ENCODE measurements at regions of chr7 and their contacts with region 1.

Region 1: DNA sequence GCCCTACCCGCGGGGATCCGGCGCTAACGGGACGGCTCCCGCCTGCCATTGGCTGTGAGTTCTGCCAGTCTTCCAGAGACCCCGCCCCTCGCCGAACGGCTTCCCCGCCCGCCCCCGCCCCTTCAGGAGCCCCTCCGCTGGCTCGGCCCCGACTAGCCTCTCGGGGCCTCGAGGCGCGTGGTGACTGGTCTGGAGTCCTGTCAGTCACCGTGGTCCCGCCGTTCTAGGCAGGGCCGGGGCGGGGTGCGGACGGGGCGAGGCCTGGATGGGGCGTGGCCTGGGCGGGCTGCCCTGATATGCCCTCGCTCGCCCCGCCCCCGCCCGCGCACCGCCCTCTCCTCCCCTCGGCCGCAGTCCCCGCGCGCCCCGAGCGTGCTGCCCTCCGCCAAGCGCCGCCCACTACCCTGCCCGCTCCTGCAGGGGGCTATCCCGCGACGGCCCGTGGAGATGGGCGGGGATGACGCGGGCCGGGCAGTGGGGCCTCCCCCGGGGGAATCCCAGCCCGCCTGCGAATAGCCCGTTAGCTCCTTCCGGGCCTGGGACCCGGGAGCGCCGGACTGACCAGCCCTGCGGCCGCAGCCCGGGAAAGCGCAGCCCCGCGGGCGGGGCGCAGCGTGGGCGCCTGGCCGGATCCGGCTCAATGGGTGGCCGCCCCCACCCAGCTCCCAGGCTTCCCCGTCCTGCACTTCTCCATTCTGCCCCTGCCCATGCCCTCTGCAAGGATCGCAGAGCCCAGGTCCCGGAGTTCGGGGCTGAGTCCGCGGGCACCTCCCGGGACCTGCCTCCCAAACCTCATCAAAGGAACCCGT is 450 bp upstream of the HIP1 start:
- DNase-seq: peak; percentile 99 to 100 (median 100)
- ATAC-seq: peak; percentile 98 to 100 (median 99)
- H3K4me3 ChIP-seq: peak overlapping the region; percentile 76 to 100 (median 98)
- H3K27ac ChIP-seq: peak overlapping the region; percentile 71 to 95 (median 90)
- H3K4me1 ChIP-seq: peaks cover 0 to 42% (median 16%) of the 10 kb centered on the region in 12 donors
- H3K27me3 ChIP-seq: no peaks in the 10 kb centered on the region
- CTCF ChIP-seq: peak in 6 of 12 donors; percentile 21 to 43 (median 27)
- POLR2A ChIP-seq: peak in 1 of 2 donors; percentile 58

Region 2: DNA sequence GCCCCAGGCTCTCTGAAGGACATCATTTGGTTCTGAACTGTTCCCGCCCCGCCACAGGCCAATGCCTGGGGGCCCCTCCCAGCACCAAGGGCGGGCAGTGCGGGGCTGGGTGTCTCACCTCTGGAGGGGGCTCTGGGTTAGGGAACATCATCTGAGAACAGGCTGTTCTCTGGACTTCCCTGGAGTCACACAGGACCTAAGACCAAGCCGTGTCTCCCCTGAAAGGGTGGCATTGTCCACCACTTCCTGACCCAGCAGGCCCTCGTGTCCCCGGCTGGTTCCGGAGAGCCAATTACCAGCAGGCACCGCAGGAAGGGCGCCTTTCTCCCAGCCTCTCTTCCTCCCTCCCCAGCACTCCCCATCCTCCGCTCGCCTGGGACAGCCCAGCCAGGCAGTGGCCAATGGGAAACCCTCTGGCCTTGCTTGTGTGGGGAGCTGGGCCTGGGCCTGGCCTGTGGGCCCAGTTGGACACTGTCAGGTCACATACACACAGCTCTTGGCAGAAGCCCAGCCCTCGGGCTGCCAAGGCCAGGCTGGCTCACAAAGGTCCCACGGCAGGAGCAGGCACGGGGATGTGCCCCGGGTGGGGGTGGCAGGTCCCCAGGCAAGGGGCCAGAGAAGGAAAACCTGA is 127.5 kb before region 1 on chr7:
- intact Hi-C with region 1: loop called in 5 of 10 experiments (anchors 2 to 10 kb)
- DNase-seq: peak; percentile 85 to 95 (median 88)
- ATAC-seq: peak; percentile 99
- H3K4me3 ChIP-seq: peak overlapping the region in 10 of 12 donors; percentile 22 to 50 (median 38)
- H3K27ac ChIP-seq: peak overlapping the region; percentile 52 to 93 (median 80)
- H3K4me1 ChIP-seq: peaks cover 0 to 18% (median 7%) of the 10 kb centered on the region in 12 donors
- H3K27me3 ChIP-seq: no peaks in the 10 kb centered on the region
- CTCF ChIP-seq: peak in 4 of 12 donors; percentile 14 to 29 (median 20)
- POLR2A ChIP-seq: peak in 1 of 2 donors; percentile 38

Region 3: GRCh38 chr7:75617634-75618234 is 121.5 kb before region 1 on chr7:
- intact Hi-C with region 1: loop called in 3 of 10 experiments (anchors 5 to 10 kb)
- DNase-seq: peak; percentile 49 to 85 (median 74)
- ATAC-seq: peak; percentile 64 to 84 (median 78)
- H3K4me3 ChIP-seq: peak overlapping the region in 1 of 12 donors; percentile 2
- H3K27ac ChIP-seq: peak overlapping the region in 3 of 12 donors; percentile 39 to 89 (median 52)
- H3K4me1 ChIP-seq: peaks cover 0 to 69% (median 3%) of the 10 kb centered on the region in 12 donors
- H3K27me3 ChIP-seq: no peaks in the 10 kb centered on the region
- CTCF ChIP-seq: no peak
- POLR2A ChIP-seq: no peak

Region 4: GRCh38 chr7:75642810-75643486 is 96.2 kb before region 1 on chr7:
- intact Hi-C with region 1: loop called in 2 of 10 experiments (anchors 10 kb)
- DNase-seq: peak in 1 of 5 donors; percentile 36
- ATAC-seq: peak in 2 of 4 donors; percentile 29 to 57
- H3K4me3 ChIP-seq: no peak overlapping the region
- H3K27ac ChIP-seq: no peak overlapping the region
- H3K4me1 ChIP-seq: peaks cover 0 to 20% (median 13%) of the 10 kb centered on the region in 12 donors
- H3K27me3 ChIP-seq: no peaks in the 10 kb centered on the region
- CTCF ChIP-seq: peak; percentile 38 to 80 (median 58)
- POLR2A ChIP-seq: no peak

Region 5: GRCh38 chr7:75650681-75651080 is 88.5 kb before region 1 on chr7:
- intact Hi-C with region 1: loop called in 2 of 10 experiments (anchors 10 kb)
- DNase-seq: peak; percentile 53 to 76 (median 68)
- ATAC-seq: peak; percentile 66 to 93 (median 88)
- H3K4me3 ChIP-seq: no peak overlapping the region
- H3K27ac ChIP-seq: peak overlapping the region in 9 of 12 donors; percentile 1 to 63 (median 54)
- H3K4me1 ChIP-seq: peaks cover 0 to 26% (median 13%) of the 10 kb centered on the region in 12 donors
- H3K27me3 ChIP-seq: no peaks in the 10 kb centered on the region
- CTCF ChIP-seq: no peak
- POLR2A ChIP-seq: no peak

Region 6: GRCh38 chr7:75662579-75663301 is 76.5 kb before region 1 on chr7:
- intact Hi-C with region 1: loop called in 2 of 10 experiments (anchors 10 kb)
- DNase-seq: no peak
- ATAC-seq: no peak
- H3K4me3 ChIP-seq: no peak overlapping the region
- H3K27ac ChIP-seq: no peak overlapping the region
- H3K4me1 ChIP-seq: peaks cover 0 to 3% (median 0%) of the 10 kb centered on the region in 12 donors
- H3K27me3 ChIP-seq: no peaks in the 10 kb centered on the region
- CTCF ChIP-seq: no peak
- POLR2A ChIP-seq: no peak

Region 7: GRCh38 chr7:75679060-75679459 is 60.1 kb before region 1 on chr7:
- intact Hi-C with region 1: no loop called
- DNase-seq: no peak
- ATAC-seq: no peak
- H3K4me3 ChIP-seq: no peak overlapping the region
- H3K27ac ChIP-seq: no peak overlapping the region
- H3K4me1 ChIP-seq: no peaks in the 10 kb centered on the region
- H3K27me3 ChIP-seq: no peaks in the 10 kb centered on the region
- CTCF ChIP-seq: no peak
- POLR2A ChIP-seq: no peak